ENCODE measurements at regions of chr20 and their contacts with region 1.

Region 1: GRCh38 chr20:18388860-18389259 is 78.0 kb downstream of the DZANK1 start:
- DNase-seq: peak; percentile 75
- H3K4me3 ChIP-seq: no peak overlapping the region
- H3K4me3 Mint-ChIP-seq: peak overlapping the region; percentile 66
- H3K27ac Mint-ChIP-seq: peak overlapping the region; percentile 89
- H3K4me1 ChIP-seq: peaks cover 35% of the 10 kb centered on the region
- H3K4me1 Mint-ChIP-seq: peaks cover 20% of the 10 kb centered on the region
- H3K27me3 ChIP-seq: no peaks in the 10 kb centered on the region
- H3K27me3 Mint-ChIP-seq: no peaks in the 10 kb centered on the region
- CTCF ChIP-seq: no peak

Region 2: DNA sequence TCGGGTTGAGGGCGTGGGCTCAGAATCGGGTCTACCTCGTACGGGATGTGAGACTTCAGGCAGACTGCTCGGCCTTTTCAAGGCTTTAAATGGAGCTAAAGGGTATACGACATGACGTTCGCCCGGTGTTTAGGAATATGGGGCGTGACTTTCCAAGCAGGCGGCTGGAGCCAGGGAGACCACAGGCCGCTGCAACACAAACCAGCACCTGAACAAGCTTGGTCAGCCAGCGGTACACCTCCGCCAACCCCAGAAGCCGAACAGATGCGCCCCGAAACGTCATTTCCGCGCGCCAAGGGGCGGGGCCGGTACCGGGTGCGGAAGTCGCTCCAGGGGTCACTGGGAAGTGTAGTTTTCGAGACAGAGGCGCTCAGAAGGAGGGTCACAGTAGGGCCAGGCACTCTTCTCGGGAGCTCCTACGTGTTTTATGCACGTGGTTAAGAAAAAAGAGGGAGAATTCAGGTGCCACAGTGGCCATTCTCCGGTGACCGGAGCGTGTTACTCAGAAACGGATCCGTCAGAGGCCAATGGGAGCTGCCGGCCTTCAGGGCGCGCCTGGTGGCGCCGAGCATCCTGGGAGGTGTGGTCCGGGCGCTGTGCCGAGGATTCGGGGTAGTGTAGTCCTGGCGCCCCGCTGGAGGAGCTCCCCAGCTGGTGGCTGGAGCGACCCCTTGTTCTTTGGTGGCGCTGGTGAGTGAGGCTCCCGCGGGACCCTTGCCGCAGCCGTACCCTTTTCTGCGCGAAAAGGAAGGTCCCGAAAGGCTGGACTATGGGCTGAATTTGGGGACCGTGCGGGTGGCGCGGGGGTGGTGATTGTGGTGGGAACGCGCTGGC is 100.7 kb before region 1 on chr20 and contains the start of gene ZNF133:
- CTCF ChIA-PET with region 1: interaction called, 3 read pairs
- POLR2A ChIA-PET with region 1: interaction called, 4 read pairs
- intact Hi-C with region 1: loop called (anchors 5 kb)
- DNase-seq: peak; percentile 98 to 99
- H3K4me3 ChIP-seq: peak within 1 kb of the TSS; percentile 68
- H3K4me3 Mint-ChIP-seq: peak within 1 kb of the TSS; percentile 96
- H3K27ac Mint-ChIP-seq: peak within 1 kb of the TSS; percentile 96
- H3K4me1 ChIP-seq: 0 out of 2 replicates have a peak, but pooled peaks cover 13% of the 10 kb centered on the region
- H3K4me1 Mint-ChIP-seq: peaks cover 17% of the 10 kb centered on the region
- H3K27me3 ChIP-seq: no peaks in the 10 kb centered on the region
- H3K27me3 Mint-ChIP-seq: no peaks in the 10 kb centered on the region
- CTCF ChIP-seq: peak in 1 of 2 experiments; percentile 46
- total RNA-seq, gene ZNF133: 14.8 and 17.4 TPM in 2 replicates

Region 3: DNA sequence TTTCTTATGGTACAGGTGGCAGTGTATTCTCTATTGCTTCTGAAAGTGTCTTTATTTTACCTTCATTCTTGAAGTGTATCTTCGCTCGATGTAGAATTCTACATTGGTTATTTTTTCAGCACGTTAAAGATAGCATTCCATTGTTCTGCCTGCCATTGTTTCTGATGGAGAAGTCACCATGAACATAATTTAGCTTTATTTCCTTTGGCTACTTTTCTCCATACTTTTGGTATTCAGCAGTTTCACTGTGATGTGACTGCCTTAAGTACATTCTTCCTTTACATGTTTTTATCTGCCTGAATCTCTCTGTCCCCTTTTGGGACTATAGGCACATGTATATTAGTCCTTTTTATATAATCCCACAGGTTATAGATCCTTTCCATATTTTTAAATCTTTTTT is 81.6 kb before region 1 on chr20:
- CTCF ChIA-PET with region 1: no interaction called
- POLR2A ChIA-PET with region 1: no interaction called
- intact Hi-C with region 1: loop called (anchors 5 kb)
- DNase-seq: no peak
- H3K4me3 ChIP-seq: no peak overlapping the region
- H3K4me3 Mint-ChIP-seq: no peak overlapping the region
- H3K27ac Mint-ChIP-seq: no peak overlapping the region
- H3K4me1 ChIP-seq: 0 out of 2 replicates have a peak, but pooled peaks cover 8% of the 10 kb centered on the region
- H3K4me1 Mint-ChIP-seq: peaks cover 13% of the 10 kb centered on the region
- H3K27me3 ChIP-seq: no peaks in the 10 kb centered on the region
- H3K27me3 Mint-ChIP-seq: no peaks in the 10 kb centered on the region
- CTCF ChIP-seq: no peak

Region 4: DNA sequence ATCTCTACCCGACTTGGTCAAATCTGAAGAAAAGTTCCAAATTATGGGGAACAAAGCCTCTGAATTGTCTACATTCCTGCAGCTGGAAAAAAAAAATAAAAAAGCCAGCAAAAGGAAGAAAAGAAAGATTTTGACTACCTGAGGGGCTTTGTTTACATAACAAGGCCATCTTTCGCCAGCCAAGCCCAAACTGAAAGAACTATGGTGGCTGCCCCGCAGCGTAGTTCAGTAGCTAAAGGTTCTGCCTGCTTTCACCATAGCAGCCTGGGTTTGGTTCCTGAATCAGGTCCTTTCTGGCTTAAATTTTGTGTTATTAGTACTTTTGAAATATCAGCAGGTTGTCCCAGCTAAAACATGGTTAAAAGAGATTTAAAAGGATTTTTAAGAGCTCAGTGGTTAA is 65.2 kb before region 1 on chr20:
- CTCF ChIA-PET with region 1: no interaction called
- POLR2A ChIA-PET with region 1: no interaction called
- intact Hi-C with region 1: loop called (anchors 5 kb)
- DNase-seq: no peak
- H3K4me3 ChIP-seq: no peak overlapping the region
- H3K4me3 Mint-ChIP-seq: no peak overlapping the region
- H3K27ac Mint-ChIP-seq: peak overlapping the region; percentile 69
- H3K4me1 ChIP-seq: peaks cover 63% of the 10 kb centered on the region
- H3K4me1 Mint-ChIP-seq: peaks cover 17% of the 10 kb centered on the region
- H3K27me3 ChIP-seq: no peaks in the 10 kb centered on the region
- H3K27me3 Mint-ChIP-seq: no peaks in the 10 kb centered on the region
- CTCF ChIP-seq: no peak

Region 5: DNA sequence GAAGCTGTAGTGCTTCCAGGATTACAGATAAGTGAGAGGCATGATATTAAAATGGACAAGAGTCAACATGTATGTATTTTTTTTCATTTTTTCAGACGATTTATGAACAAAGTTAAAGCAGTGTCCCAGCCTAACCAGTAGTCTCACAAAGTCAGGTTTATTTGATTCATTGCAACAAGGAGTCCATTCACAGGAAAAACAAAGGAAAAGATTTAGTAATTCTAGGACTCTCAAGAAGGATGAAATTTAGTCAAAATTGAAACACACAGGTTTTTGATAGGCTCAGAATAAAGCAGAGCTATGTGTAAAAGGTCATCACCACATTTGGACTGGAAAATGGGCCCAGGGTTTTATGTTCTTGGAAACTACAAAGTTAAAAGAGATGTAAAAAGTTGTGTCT is 16.6 kb before region 1 on chr20:
- CTCF ChIA-PET with region 1: no interaction called
- POLR2A ChIA-PET with region 1: no interaction called
- intact Hi-C with region 1: no loop called
- DNase-seq: no peak
- H3K4me3 ChIP-seq: no peak overlapping the region
- H3K4me3 Mint-ChIP-seq: no peak overlapping the region
- H3K27ac Mint-ChIP-seq: no peak overlapping the region
- H3K4me1 ChIP-seq: 0 out of 2 replicates have a peak, but pooled peaks cover 4% of the 10 kb centered on the region
- H3K4me1 Mint-ChIP-seq: no peaks in the 10 kb centered on the region
- H3K27me3 ChIP-seq: no peaks in the 10 kb centered on the region
- H3K27me3 Mint-ChIP-seq: no peaks in the 10 kb centered on the region
- CTCF ChIP-seq: no peak

Measured in Caco-2 (cell line).